ENCODE measurements at regions of chr5 and their contacts with region 1.

Region 1: DNA sequence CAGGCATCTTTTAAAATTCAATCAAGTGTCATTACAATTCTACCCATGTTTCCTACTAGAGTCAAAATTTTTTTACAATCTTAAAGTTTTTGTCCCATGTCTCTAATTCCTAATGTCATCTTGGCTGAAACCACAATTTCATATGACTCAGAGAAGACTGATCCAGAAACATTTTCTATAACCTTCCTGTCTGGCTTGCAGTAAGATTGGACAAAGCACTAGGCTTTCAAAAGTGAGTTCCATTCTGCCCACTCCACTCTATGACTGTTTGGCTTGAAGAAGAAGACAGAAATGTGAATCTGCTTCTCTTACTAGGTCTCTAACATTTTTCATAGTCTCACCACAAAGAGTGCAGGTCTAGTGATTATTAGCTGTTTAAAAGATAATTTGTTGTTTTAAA is 88.8 kb downstream of the NR3C1 start:
- DNase-seq: no peak
- H3K4me3 Mint-ChIP-seq: no peak overlapping the region
- H3K27ac Mint-ChIP-seq: peak overlapping the region; percentile 6
- H3K4me1 Mint-ChIP-seq: peaks cover 66% of the 10 kb centered on the region
- H3K27me3 Mint-ChIP-seq: no peaks in the 10 kb centered on the region

Region 2: GRCh38 chr5:143302341-143302740 is 12.3 kb before region 1 on chr5:
- CTCF ChIA-PET with region 1: no interaction called
- POLR2A ChIA-PET with region 1: no interaction called
- intact Hi-C with region 1: no loop called
- DNase-seq: no peak
- H3K4me3 Mint-ChIP-seq: no peak overlapping the region
- H3K27ac Mint-ChIP-seq: no peak overlapping the region
- H3K4me1 Mint-ChIP-seq: peaks cover 29% of the 10 kb centered on the region
- H3K27me3 Mint-ChIP-seq: no peaks in the 10 kb centered on the region

Region 3: GRCh38 chr5:143395638-143396352 is 81.1 kb after region 1 on chr5:
- CTCF ChIA-PET with region 1: no interaction called
- POLR2A ChIA-PET with region 1: no interaction called
- intact Hi-C with region 1: loop called (anchors 5 kb)
- DNase-seq: no peak
- H3K4me3 Mint-ChIP-seq: peak overlapping the region; percentile 62
- H3K27ac Mint-ChIP-seq: no peak overlapping the region
- H3K4me1 Mint-ChIP-seq: peaks cover 67% of the 10 kb centered on the region
- H3K27me3 Mint-ChIP-seq: no peaks in the 10 kb centered on the region